Activated B cell treated with CpG ODN at 0.5 μM for 24 hours (primary cell): ENCODE measurements at regions of chr6 and their contacts with region 1.

Region 1: GRCh38 chr6:26097268-26097875 is 10.1 kb downstream of the HFE start:
- DNase-seq: no peak
- ATAC-seq: peak; percentile 81
- H3K4me3 Mint-ChIP-seq: no peak overlapping the region
- H3K27ac Mint-ChIP-seq: no peak overlapping the region
- H3K4me1 Mint-ChIP-seq: peaks cover 16% of the 10 kb centered on the region
- H3K27me3 Mint-ChIP-seq: no peaks in the 10 kb centered on the region
- CTCF ChIP-seq: no peak

Region 2: DNA sequence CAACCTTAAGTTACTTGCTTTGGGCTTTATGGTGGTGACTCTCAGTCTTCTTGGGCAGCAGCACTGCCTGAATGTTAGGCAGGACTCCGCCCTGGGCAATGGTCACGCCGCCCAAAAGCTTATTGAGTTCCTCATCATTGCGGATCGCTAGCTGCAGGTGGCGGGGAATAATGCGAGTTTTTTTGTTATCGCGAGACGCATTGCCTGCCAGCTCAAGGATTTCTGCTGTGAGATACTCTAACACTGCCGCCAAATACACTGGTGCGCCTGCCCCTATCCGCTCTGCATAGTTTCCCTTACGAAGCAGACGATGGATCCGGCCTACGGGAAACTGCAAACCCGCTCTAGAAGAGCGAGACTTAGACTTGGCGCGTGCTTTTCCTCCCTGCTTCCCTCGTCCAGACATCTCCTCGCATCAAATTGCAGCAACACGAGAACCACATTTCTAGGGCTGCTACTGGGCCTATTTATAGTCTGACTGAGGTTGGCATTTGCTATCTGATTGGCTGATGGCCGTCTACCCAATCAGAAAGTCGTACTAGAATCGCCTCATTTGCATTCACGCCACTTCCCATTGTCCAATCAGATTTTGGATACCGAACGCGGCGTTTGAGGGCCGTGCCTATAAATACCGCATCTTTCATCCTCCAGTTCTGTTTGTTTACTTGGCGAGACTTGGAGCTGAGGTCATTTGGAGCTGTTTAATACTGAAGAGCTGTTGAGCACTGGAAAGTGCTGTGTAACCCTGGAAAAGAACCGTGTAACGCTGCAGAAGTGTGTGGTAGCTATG is 371.1 kb before region 1 on chr6:
- CTCF ChIA-PET with region 1: no interaction called
- POLR2A ChIA-PET with region 1: no interaction called
- intact Hi-C with region 1: loop called (anchors 10 kb)
- DNase-seq: no peak
- ATAC-seq: no peak
- H3K4me3 Mint-ChIP-seq: no peak overlapping the region
- H3K27ac Mint-ChIP-seq: no peak overlapping the region
- H3K4me1 Mint-ChIP-seq: no peaks in the 10 kb centered on the region
- H3K27me3 Mint-ChIP-seq: peaks cover 29% of the 10 kb centered on the region
- CTCF ChIP-seq: no peak

Region 3: GRCh38 chr6:25788305-25788922 is 309.0 kb before region 1 on chr6:
- CTCF ChIA-PET with region 1: no interaction called
- POLR2A ChIA-PET with region 1: no interaction called
- intact Hi-C with region 1: loop called (anchors 10 kb)
- DNase-seq: no peak
- ATAC-seq: peak; percentile 50
- H3K4me3 Mint-ChIP-seq: no peak overlapping the region
- H3K27ac Mint-ChIP-seq: no peak overlapping the region
- H3K4me1 Mint-ChIP-seq: no peaks in the 10 kb centered on the region
- H3K27me3 Mint-ChIP-seq: peaks cover 3% of the 10 kb centered on the region
- CTCF ChIP-seq: no peak

Region 4: DNA sequence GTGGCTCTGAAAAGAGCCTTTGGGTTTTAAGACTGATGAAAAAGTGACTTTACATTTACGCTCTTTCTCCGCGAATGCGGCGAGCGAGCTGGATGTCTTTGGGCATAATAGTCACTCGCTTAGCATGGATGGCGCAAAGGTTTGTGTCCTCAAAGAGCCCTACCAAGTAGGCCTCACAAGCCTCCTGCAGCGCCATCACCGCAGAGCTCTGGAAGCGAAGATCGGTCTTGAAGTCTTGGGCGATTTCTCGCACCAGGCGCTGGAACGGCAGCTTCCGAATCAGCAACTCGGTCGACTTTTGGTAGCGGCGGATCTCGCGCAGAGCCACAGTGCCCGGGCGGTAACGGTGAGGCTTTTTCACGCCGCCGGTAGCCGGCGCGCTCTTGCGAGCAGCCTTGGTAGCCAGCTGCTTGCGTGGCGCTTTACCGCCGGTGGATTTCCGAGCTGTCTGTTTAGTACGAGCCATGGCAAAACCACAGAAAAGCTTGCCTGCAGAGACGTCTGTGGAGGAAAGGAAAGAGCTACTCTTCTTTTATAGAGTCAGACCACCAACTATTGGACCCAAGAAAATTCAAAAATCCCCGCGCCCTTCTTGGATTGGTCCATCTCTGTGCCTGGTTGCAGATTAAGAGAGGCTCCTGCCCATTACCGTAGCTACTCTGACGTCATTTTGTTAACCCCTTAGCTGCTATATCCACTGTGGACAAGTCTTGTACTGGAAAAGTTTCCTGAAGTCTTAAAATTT is 65.6 kb before region 1 on chr6:
- CTCF ChIA-PET with region 1: interaction called, 15 read pairs
- POLR2A ChIA-PET with region 1: interaction called, 26 read pairs
- intact Hi-C with region 1: loop called (anchors 1 kb)
- DNase-seq: peak; percentile 55
- ATAC-seq: peak; percentile 62
- H3K4me3 Mint-ChIP-seq: peak overlapping the region; percentile 93
- H3K27ac Mint-ChIP-seq: peak overlapping the region; percentile 98
- H3K4me1 Mint-ChIP-seq: peaks cover 40% of the 10 kb centered on the region
- H3K27me3 Mint-ChIP-seq: peaks cover 2% of the 10 kb centered on the region
- CTCF ChIP-seq: no peak

Region 5: GRCh38 chr6:26065952-26066380 is 31.4 kb before region 1 on chr6:
- CTCF ChIA-PET with region 1: interaction called, 349 read pairs
- POLR2A ChIA-PET with region 1: interaction called, 175 read pairs
- intact Hi-C with region 1: loop called (anchors 1 kb)
- DNase-seq: no peak
- ATAC-seq: peak; percentile 97
- H3K4me3 Mint-ChIP-seq: no peak overlapping the region
- H3K27ac Mint-ChIP-seq: peak overlapping the region; percentile 35
- H3K4me1 Mint-ChIP-seq: peaks cover 8% of the 10 kb centered on the region
- H3K27me3 Mint-ChIP-seq: peaks cover 3% of the 10 kb centered on the region
- CTCF ChIP-seq: peak; percentile 39